ENCODE measurements at regions of chr21 and their contacts with region 1.

Region 1: GRCh38 chr21:42258153-42258884 is 39.4 kb downstream of the ABCG1 start:
- DNase-seq: peak; percentile 31
- ATAC-seq: peak; percentile 97
- H3K4me3 ChIP-seq: no peak overlapping the region
- H3K27ac ChIP-seq: no peak overlapping the region
- H3K4me1 ChIP-seq: peaks cover 5 to 10% of the 10 kb centered on the region in 2 experiments; a peak in 3 of 4 replicates
- H3K27me3 ChIP-seq: peaks cover 9% of the 10 kb centered on the region
- CTCF ChIP-seq: peak; percentile 83 to 95 (median 93)
- POLR2A ChIP-seq: no peak
- RAD21 ChIP-seq: peak; percentile 74

Region 2: DNA sequence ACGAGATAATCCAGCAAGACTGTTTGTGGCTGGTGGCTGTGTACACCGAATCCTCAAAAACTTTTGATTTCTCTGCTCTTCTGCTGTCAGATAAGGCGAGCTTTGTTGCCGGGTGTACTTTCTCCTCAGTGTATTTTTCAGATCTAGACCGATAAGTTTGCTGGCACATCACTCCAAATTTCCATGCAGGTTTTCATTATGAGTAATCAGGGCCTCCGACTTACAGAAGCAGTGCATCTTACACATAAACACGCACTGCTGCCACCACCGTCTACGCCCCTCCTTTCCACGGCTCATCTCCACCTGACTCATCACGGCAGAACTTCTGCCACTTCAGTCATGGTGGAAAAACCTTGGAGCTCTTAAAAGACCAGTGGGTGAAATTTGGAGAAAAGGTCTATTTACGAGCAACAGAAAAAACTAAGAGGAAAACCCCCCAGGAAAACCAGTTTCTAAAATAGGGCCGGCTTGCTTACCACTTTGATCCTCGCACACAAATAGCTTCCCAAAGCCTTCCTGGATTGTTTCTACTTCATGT is 255.8 kb before region 1 on chr21:
- CTCF ChIA-PET with region 1: no interaction called
- POLR2A ChIA-PET with region 1: no interaction called
- RAD21 ChIA-PET with region 1: no interaction called
- intact Hi-C with region 1: no loop called
- DNase-seq: no peak
- ATAC-seq: no peak
- H3K4me3 ChIP-seq: no peak overlapping the region
- H3K27ac ChIP-seq: no peak overlapping the region
- H3K4me1 ChIP-seq: no peaks in the 10 kb centered on the region
- H3K27me3 ChIP-seq: no peaks in the 10 kb centered on the region
- CTCF ChIP-seq: no peak
- POLR2A ChIP-seq: no peak
- RAD21 ChIP-seq: no peak

Region 3: DNA sequence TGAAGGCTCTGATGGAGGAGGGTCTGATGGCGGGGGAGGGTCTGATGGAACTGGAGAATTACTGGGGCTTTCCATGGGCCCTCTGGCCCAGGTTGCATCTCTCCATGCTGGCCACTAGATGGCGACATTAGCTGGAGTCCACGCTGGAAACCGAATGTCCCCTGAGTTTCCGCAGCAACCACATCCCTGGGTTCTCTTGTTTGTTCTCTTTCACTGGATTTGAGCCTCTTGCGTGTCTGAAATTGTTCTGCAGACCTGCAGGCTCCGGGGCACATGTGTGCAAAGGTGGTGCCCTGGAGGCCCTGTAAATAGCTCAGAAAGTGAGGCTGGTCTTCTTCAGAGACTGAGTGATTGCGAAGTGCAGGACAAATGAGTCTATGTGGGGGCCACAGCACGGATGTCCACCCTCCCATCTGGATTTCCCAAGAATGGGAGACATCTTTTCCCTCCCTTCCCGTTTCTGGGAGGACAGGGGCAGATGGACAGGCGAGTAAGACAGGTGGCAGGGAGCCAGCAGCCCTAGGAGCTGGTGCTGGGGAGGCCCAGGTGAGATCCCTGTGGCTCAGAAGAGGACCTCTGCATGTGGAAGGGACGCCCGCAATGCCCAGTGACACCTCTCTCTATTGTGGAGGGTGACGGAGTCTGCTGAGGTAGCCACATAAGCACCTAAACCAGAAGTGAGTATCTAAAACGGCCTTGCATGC is 112.6 kb before region 1 on chr21:
- CTCF ChIA-PET with region 1: interaction called, 36 read pairs
- POLR2A ChIA-PET with region 1: no interaction called
- RAD21 ChIA-PET with region 1: interaction called, 4 to 9 read pairs
- intact Hi-C with region 1: loop called (anchors 1 kb)
- DNase-seq: peak; percentile 21
- ATAC-seq: peak; percentile 88
- H3K4me3 ChIP-seq: no peak overlapping the region
- H3K27ac ChIP-seq: no peak overlapping the region
- H3K4me1 ChIP-seq: 0 out of 4 replicates have a peak, but pooled peaks cover 2 to 3% of the 10 kb centered on the region in 2 experiments
- H3K27me3 ChIP-seq: no peaks in the 10 kb centered on the region
- CTCF ChIP-seq: peak; percentile 72 to 92 (median 87)
- POLR2A ChIP-seq: no peak
- RAD21 ChIP-seq: peak; percentile 85

Region 4: DNA sequence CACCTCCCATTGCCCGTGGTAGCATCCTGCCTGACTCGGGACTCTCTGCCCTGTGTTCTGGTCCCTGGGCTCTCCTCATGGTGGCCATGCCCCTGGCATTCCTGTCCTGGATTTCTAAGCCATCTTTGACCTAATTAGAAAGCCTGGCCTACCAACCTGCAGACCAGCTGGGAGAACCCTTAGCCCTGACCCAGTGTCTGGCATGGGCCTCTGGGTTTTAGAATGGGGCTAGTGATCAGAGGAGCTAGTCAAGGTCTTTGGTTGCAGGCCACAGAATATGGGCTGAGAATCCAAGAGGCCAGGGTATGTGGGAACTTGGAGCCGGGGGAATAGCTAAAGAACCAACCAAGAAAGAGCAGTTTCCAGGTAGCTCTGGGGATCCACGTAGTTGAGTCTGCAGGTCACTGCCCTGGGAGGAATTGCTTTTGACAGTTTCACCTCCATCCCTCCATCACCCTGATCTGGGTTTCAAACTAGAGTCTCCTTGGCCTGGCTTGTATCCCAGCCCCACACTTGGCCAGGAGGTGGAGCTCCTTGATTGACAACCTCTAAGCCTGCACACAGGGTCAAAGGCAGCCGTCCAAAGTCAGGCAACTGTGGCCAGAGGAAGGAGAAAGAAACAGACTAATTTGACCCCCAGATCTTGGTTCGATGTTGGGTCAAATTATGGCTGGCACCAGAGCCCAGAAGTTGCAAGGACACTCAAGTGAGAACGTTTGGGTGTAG is 94.1 kb before region 1 on chr21:
- CTCF ChIA-PET with region 1: interaction called, 26 read pairs
- POLR2A ChIA-PET with region 1: interaction called, 4 read pairs
- RAD21 ChIA-PET with region 1: interaction called in 1 of 2 experiments, 3 read pairs
- intact Hi-C with region 1: loop called (anchors 2 kb)
- DNase-seq: peak; percentile 29
- ATAC-seq: peak; percentile 91
- H3K4me3 ChIP-seq: no peak overlapping the region
- H3K27ac ChIP-seq: no peak overlapping the region
- H3K4me1 ChIP-seq: peaks cover 0 to 16% of the 10 kb centered on the region in 2 experiments; a peak in 2 of 4 replicates
- H3K27me3 ChIP-seq: no peaks in the 10 kb centered on the region
- CTCF ChIP-seq: peak; percentile 56 to 73 (median 62); a peak in 5 of 6 replicates
- POLR2A ChIP-seq: no peak
- RAD21 ChIP-seq: peak; percentile 84

Region 5: DNA sequence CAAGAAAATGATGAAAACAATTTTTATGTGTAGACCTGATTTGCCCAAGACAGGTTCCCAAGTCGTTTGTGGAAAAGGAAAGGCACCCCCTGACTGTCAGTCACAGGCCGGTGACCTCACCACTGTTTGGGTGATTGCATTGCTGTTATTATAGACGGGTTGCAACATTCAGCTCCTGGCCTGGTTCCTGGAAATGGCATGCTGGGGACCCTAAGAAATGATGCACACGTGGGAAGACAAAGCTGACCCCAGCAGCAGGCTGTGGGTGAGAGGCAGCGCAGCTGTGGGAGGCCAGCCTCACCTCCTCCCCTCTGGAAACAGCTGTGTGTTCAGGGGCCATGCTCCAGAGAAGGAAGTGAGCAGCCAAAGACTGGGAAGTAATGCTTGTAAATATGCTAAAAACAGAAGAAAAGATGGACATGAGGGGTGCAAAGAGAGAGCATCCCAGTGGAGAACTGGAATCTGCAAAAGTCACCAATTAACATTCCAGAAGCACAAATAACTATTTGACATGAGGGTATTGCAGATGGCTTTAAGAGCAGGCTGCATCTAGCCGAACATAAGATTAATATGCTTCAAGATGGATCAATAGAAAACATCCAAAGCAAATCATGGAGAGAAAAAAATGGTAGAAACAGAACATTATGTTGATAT is 62.8 kb before region 1 on chr21:
- CTCF ChIA-PET with region 1: no interaction called
- POLR2A ChIA-PET with region 1: no interaction called
- RAD21 ChIA-PET with region 1: no interaction called
- intact Hi-C with region 1: no loop called
- DNase-seq: no peak
- ATAC-seq: no peak
- H3K4me3 ChIP-seq: no peak overlapping the region
- H3K27ac ChIP-seq: no peak overlapping the region
- H3K4me1 ChIP-seq: peaks cover 7 to 9% of the 10 kb centered on the region in 2 experiments; a peak in 3 of 4 replicates
- H3K27me3 ChIP-seq: no peaks in the 10 kb centered on the region
- CTCF ChIP-seq: no peak
- POLR2A ChIP-seq: no peak
- RAD21 ChIP-seq: no peak

Region 6: DNA sequence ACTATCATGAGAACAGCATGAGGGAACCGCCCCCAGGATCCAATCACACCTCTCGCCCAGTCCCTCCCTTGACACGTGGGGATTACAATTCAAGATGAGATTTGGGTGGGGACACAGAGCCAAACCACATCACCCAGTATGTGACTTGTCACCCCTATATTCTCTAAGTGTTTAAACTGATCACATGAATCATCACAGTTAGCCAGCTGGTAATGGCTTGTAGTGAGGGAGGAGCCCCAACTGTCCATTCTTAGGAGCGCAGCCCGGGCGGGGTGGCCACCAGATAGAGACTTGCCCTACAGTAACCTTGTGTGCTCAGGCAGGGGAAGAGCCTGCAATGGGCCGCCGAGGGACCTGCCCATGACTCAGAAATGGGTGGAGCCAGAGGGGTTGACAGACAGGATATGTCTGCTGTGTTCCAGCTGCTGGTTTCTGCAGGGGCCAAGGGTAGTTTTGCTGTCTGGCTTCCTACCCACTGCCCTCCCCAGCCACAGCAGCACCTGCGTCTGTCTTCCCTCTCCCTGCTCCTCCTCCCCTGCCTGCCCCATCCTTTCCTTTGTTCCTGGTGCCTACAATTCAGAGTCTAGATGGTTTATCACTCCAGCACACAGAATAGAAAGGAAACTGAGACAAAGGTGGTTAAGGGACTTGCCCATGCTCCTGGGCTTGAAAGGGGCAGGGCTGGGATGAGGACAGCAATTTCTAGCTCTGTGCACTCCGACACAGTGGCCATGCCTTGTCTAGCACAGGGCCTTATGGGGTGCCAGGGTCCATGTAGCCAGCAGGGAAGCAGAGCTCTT is 30.2 kb before region 1 on chr21:
- CTCF ChIA-PET with region 1: no interaction called
- POLR2A ChIA-PET with region 1: no interaction called
- RAD21 ChIA-PET with region 1: no interaction called
- intact Hi-C with region 1: no loop called
- DNase-seq: peak; percentile 64
- ATAC-seq: peak; percentile 100
- H3K4me3 ChIP-seq: no peak overlapping the region
- H3K27ac ChIP-seq: no peak overlapping the region
- H3K4me1 ChIP-seq: peaks cover 12 to 20% of the 10 kb centered on the region in 2 experiments
- H3K27me3 ChIP-seq: no peaks in the 10 kb centered on the region
- CTCF ChIP-seq: no peak
- POLR2A ChIP-seq: no peak
- RAD21 ChIP-seq: no peak

Region 7: DNA sequence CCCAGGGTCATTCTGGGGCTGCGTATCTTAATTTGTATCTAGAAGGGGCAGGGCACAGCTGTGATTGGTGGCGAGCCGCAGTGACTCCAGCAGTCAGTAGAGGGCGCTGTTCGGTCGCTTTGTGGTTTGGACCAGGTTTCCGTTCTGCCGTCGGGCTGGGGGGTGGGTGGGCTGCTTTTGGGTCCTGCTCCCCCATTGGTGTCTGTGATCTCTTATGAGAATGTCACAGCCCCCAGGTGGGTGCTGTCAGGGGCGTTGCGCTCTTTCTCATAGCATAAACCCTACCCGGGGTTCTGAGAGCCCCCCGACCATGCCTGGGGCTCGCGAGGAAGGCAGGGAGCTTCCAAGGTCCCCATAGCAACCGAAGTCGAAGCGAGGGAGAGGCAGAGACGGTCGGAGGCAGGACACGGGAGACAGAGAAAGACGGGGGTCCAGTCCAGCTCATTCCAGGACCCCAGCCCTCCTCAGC is 51.5 kb after region 1 on chr21:
- CTCF ChIA-PET with region 1: interaction called, 11 read pairs
- POLR2A ChIA-PET with region 1: no interaction called
- RAD21 ChIA-PET with region 1: no interaction called
- intact Hi-C with region 1: no loop called
- DNase-seq: peak; percentile 6
- ATAC-seq: peak; percentile 91
- H3K4me3 ChIP-seq: no peak overlapping the region
- H3K27ac ChIP-seq: no peak overlapping the region
- H3K4me1 ChIP-seq: peaks cover 0 to 5% of the 10 kb centered on the region in 2 experiments; a peak in 1 of 4 replicates
- H3K27me3 ChIP-seq: no peaks in the 10 kb centered on the region
- CTCF ChIP-seq: peak; percentile 61 to 90 (median 87); a peak in 5 of 6 replicates
- POLR2A ChIP-seq: no peak
- RAD21 ChIP-seq: peak; percentile 75